ENCODE measurements at regions of chr10 and their contacts with region 1.

Region 1: DNA sequence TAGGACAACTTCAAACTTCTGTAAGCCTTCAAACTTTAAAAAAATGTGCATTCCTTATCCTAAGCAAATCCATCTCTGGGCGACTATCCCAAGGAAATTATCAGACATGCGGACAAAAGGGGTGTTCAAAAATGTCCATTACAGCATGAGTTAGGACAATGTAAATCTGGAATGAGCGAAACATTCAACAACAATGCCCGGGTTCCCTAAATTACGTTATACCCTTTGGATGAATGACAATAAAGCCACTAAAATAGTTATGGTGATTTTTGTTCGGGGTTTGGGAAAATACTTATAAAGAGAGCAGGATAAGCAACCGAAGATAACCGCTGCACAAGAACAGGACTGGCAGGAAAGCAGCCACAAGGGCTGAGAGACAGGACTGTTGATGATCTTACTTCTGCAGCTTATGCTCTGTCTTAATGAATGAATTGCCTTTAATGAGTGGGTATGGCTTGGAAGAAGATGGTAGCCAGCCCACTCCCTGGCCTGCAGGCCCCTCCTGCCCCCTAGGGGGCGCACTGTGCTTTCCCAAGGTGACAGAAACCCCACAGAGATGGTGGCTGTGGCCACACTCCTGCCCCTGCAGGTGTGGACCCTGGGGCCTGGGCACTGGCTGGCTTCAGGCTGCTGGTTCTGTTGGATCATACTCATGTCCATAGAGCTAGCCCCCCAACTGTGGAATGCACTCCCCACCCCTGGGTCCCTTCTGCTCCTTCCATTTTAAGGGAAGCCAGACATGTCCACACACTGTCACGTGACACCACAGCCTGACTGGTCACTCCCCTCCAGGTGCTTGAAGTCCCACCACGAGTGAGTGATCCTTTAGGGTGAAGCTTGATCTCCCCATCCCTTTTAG is 45.0 kb downstream of the ZCCHC24 start:
- DNase-seq: peak in 1 of 2 donors; percentile 64
- ATAC-seq: no peak
- H3K4me3 ChIP-seq: no peak overlapping the region
- H3K27ac ChIP-seq: peak overlapping the region in 9 of 10 donors; percentile 80 to 92 (median 88)
- H3K4me1 ChIP-seq: peaks cover 0 to 94% (median 0%) of the 10 kb centered on the region in 9 donors
- H3K27me3 ChIP-seq: no peaks in the 10 kb centered on the region
- CTCF ChIP-seq: peak; percentile 39 to 78 (median 66)

Region 2: GRCh38 chr10:79274279-79275104 is 125.9 kb before region 1 on chr10:
- intact Hi-C with region 1: no loop called
- DNase-seq: peak; percentile 83 to 87
- ATAC-seq: peak; percentile 79 to 92 (median 87)
- H3K4me3 ChIP-seq: no peak overlapping the region
- H3K27ac ChIP-seq: peak overlapping the region; percentile 73 to 93 (median 87)
- H3K4me1 ChIP-seq: peaks cover 52 to 89% (median 80%) of the 10 kb centered on the region in 9 donors
- H3K27me3 ChIP-seq: no peaks in the 10 kb centered on the region
- CTCF ChIP-seq: peak in 6 of 9 donors; percentile 10 to 41 (median 24)

Region 3: DNA sequence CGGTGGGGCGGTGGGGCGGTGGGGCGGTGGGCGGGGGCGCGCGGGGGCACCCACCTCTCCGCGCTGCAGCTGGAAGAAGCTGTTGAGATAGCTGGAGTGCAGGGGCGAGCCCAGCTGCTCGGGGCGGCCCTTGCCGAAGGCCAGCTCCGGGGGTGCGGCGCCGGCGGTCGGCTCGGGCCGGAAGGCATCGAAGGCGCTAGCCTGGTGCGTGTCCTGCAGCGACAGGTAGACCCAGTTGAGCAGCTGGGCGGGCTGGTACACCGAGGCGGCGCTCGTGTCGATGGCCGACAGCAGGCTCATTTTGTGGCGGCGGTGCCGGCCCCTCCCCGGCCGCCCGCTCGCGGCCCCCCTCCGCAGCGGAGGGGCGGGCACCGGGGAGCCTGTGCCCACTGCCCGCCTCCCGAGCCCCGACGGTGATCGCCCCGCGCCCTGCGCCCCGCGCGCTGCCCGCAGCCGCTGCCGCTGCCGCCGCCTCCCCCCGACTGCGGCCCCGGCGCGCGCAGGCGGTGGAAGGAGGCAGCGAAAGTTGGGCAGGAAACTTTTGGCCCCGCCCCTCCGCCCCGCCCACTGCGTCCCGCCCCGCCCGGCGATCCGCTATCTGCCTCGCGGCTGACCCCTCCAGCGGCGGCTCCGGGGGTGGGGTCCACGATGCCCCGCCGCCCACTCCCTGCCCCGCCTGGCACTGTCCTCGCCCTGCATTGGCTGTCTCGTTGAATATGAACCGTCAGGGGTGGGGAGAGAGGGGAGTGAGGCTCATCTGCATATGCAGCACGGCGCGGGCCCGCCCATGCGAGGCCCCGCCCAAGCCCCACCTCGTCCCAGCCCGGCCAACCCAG is 45.0 kb after region 1 on chr10 and contains the start of gene ZCCHC24:
- intact Hi-C with region 1: loop called in 7 of 10 experiments (anchors 2 to 10 kb)
- DNase-seq: peak; percentile 99
- ATAC-seq: peak; percentile 93 to 96 (median 95)
- H3K4me3 ChIP-seq: peak within 1 kb of the TSS; percentile 85 to 99 (median 96)
- H3K27ac ChIP-seq: peak within 1 kb of the TSS; percentile 92 to 99 (median 97)
- H3K4me1 ChIP-seq: peaks cover 16 to 51% (median 45%) of the 10 kb centered on the region in 9 donors
- H3K27me3 ChIP-seq: no peaks in the 10 kb centered on the region
- CTCF ChIP-seq: no peak
- total RNA-seq, gene ZCCHC24: 32.0 to 59.0 (median 49.0) TPM

Region 4: DNA sequence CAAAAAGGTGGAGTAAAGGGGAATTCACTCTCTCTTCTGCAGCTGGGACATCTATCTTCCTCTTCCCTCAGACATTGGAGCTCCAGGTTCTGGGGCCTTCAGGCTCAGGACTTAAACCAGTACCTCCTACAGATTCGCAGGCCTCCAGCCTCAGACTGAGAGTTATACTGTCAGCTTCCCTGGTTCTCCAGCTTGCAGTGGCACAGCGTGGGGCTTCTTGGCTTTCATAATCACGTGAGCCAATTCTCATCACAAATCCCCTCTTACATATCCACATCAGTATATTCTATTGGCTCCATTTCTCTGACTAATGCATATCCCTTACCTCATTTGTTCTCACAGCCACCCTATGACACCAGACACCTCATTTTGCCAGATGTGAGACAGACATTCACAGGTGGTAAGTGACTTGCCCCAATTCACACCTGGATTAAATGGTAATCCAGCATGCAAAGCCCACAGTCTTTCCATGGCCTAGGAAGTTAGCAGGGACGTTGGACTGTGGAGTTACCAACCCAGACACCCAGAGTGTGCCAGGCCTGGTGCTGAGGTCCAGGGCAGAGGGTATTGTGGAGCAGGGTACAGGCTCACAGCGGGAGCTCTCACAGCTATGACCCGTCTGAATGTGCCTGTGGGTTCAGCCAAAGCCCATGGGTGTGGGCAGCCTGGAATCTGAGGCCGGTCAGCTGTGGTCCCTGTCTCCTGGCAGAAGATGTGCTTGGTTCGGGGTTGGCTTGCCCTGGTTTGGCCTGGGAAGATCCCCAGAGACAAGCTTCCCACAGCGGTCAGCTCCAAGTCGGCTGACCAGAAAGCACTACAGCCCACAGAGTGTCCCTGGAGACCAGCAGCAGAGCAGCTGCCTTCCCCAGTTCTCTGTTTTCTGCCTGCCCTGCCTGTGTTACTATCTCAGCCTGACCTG is 63.5 kb after region 1 on chr10:
- intact Hi-C with region 1: loop called in 1 of 10 experiments (anchors 5 kb)
- DNase-seq: peak; percentile 40 to 53
- ATAC-seq: peak in 6 of 8 donors; percentile 19 to 66 (median 36)
- H3K4me3 ChIP-seq: no peak overlapping the region
- H3K27ac ChIP-seq: peak overlapping the region in 1 of 10 donors; percentile 8
- H3K4me1 ChIP-seq: peaks cover 7 to 41% (median 29%) of the 10 kb centered on the region in 9 donors
- H3K27me3 ChIP-seq: no peaks in the 10 kb centered on the region
- CTCF ChIP-seq: no peak

Measured in heart right ventricle (tissue), 16 donors.